T-cell (primary cell): ENCODE measurements at regions of chr11 and their contacts with region 1.

Region 1: GRCh38 chr11:14346303-14346955 is 12.6 kb downstream of the RRAS2 start:
- DNase-seq: no peak
- ATAC-seq: no peak
- H3K4me3 ChIP-seq: no peak overlapping the region
- H3K4me3 Mint-ChIP-seq: no peak overlapping the region
- H3K27ac ChIP-seq: no peak overlapping the region
- H3K27ac Mint-ChIP-seq: peak overlapping the region in 1 of 2 donors; percentile 33
- H3K4me1 ChIP-seq: peaks cover 0 to 7% of the 10 kb centered on the region in 2 experiments
- H3K4me1 Mint-ChIP-seq: peaks cover 40 to 44% (median 44%) of the 10 kb centered on the region in 3 donors
- H3K27me3 ChIP-seq: no peaks in the 10 kb centered on the region
- H3K27me3 Mint-ChIP-seq: no peaks in the 10 kb centered on the region

Region 2: GRCh38 chr11:14358729-14359439 is 12.5 kb after region 1 on chr11 and contains the start of gene RRAS2:
- CTCF ChIA-PET with region 1: no interaction called
- POLR2A ChIA-PET with region 1: interaction called in 1 of 2 experiments, 10 read pairs
- DNase-seq: peak; percentile 46 to 88 (median 75)
- ATAC-seq: peak; percentile 93 to 97 (median 94)
- H3K4me3 ChIP-seq: peak within 1 kb of the TSS; percentile 72 to 95
- H3K4me3 Mint-ChIP-seq: peak within 1 kb of the TSS; percentile 87 to 96 (median 88)
- H3K27ac ChIP-seq: peak within 1 kb of the TSS; percentile 23
- H3K27ac Mint-ChIP-seq: peak within 1 kb of the TSS; percentile 70 to 74
- H3K4me1 ChIP-seq: peaks cover 7 to 18% of the 10 kb centered on the region in 2 experiments
- H3K4me1 Mint-ChIP-seq: peaks cover 31 to 44% (median 37%) of the 10 kb centered on the region in 3 donors
- H3K27me3 ChIP-seq: peaks cover 0 to 2% of the 10 kb centered on the region in 2 experiments
- H3K27me3 Mint-ChIP-seq: no peaks in the 10 kb centered on the region
- total RNA-seq, gene RRAS2: 17.9 to 30.2 (median 18.5) TPM

Region 3: DNA sequence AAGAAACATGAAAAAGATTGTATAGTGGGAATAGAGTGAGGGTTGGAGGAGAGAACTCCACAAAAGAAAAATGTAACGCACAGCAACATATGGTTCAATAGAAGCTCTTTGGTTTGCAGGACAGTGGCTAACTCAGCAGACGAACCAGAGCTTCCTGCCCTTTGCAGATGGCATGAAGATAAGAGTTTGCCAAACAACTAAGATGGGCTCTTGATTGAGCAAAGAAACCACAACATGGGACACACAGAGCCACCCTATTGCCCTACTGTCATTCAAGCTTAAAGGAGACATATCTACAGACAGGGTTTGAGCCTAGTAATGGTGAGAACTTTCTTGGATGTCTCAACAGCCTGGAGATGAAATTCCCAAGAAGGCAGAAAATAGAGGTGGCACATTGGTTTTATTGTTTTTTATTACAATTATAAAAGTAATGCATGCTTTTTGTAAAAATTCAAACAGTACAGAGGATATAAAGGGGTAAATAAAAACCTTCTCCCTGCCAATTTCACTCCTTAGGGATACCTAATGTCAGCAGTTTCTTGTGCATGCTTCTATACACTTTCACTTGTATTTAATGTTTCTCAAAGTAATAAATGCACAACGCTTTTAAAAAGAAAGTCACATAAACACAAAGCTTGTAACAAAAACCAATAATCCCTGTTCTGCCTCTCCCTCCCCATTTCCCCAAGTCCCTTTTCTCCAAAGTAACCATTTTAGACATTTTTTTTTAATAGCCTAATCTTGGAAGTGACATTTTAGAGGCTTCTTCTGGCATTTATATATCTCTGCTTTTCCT is 89.5 kb after region 1 on chr11:
- CTCF ChIA-PET with region 1: no interaction called
- POLR2A ChIA-PET with region 1: no interaction called
- DNase-seq: peak in 3 of 35 experiments; percentile 5 to 33 (median 7)
- ATAC-seq: peak in 3 of 4 experiments; percentile 43 to 69 (median 52)
- H3K4me3 ChIP-seq: no peak overlapping the region
- H3K4me3 Mint-ChIP-seq: no peak overlapping the region
- H3K27ac ChIP-seq: no peak overlapping the region
- H3K27ac Mint-ChIP-seq: peak overlapping the region; percentile 5 to 55
- H3K4me1 ChIP-seq: peaks cover 5 to 24% of the 10 kb centered on the region in 2 experiments
- H3K4me1 Mint-ChIP-seq: peaks cover 22 to 38% (median 34%) of the 10 kb centered on the region in 3 donors
- H3K27me3 ChIP-seq: no peaks in the 10 kb centered on the region
- H3K27me3 Mint-ChIP-seq: no peaks in the 10 kb centered on the region

Region 4: DNA sequence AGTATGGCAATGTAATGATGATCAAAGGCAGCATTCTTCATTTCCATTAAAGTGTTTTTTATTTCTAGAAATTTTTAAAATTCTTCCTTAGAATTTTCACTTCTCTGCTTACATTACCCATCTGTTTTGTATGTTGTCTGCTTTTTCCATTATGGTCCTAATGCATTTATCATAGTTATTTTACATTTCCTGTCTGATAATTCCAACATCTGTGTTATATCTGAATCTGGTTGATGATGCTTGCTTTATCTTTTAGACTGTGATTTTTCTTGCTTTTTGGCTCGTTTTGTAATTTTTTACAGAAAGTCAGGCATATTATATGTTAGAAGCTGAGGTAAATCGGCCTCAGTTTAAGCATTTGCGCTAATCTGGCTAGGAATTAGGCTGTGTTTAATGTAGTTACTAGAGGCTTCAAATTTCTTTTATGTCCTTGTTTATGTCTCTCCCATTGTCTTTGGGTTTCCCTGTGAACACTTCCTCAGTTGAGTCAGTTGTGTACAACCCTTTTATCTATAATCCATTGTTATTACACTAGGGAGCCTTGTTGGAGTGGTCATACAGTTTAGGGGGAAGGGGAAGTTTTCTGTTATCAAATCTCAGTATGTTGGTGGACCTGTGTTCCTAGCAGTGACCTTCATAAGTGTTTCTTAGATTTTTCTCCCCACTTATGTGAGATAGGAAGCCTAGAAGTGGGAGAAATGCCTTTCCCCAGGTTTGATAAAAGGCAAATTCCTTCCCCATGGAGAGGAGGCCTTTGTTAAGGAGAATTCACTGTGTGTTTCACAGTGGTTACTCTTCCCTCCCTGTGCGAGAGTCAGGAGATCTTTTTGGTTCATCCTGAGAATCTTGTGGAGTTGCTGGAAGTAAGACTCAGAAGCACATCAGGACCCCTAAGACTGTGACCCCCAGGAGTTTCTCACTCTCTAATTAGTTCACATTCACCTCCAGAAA is 1205.7 kb after region 1 on chr11:
- CTCF ChIA-PET with region 1: no interaction called
- POLR2A ChIA-PET with region 1: no interaction called
- DNase-seq: no peak
- ATAC-seq: no peak
- H3K4me3 ChIP-seq: no peak overlapping the region
- H3K4me3 Mint-ChIP-seq: no peak overlapping the region
- H3K27ac ChIP-seq: no peak overlapping the region
- H3K27ac Mint-ChIP-seq: no peak overlapping the region
- H3K4me1 ChIP-seq: no peaks in the 10 kb centered on the region
- H3K4me1 Mint-ChIP-seq: no peaks in the 10 kb centered on the region
- H3K27me3 ChIP-seq: no peaks in the 10 kb centered on the region
- H3K27me3 Mint-ChIP-seq: peaks cover 0 to 1% of the 10 kb centered on the region in 2 donors